CD8-positive, alpha-beta T cell (primary cell): ENCODE measurements at regions of chr6 and their contacts with region 1.

Region 1: GRCh38 chr6:108944707-108945680 is 96.8 kb downstream of the ARMC2 start:
- DNase-seq: no peak
- ATAC-seq: no peak
- H3K4me3 ChIP-seq: no peak overlapping the region
- H3K4me3 Mint-ChIP-seq: no peak overlapping the region
- H3K27ac ChIP-seq: no peak overlapping the region
- H3K27ac Mint-ChIP-seq: peak overlapping the region; percentile 37
- H3K4me1 ChIP-seq: peaks cover 27% of the 10 kb centered on the region
- H3K4me1 Mint-ChIP-seq: peaks cover 48% of the 10 kb centered on the region
- H3K27me3 ChIP-seq: no peaks in the 10 kb centered on the region
- H3K27me3 Mint-ChIP-seq: no peaks in the 10 kb centered on the region
- CTCF ChIP-seq: no peak

Region 2: GRCh38 chr6:108760126-108761050 is 184.6 kb before region 1 on chr6:
- CTCF ChIA-PET with region 1: no interaction called
- POLR2A ChIA-PET with region 1: no interaction called
- intact Hi-C with region 1: no loop called
- DNase-seq: no peak
- ATAC-seq: no peak
- H3K4me3 ChIP-seq: no peak overlapping the region
- H3K4me3 Mint-ChIP-seq: no peak overlapping the region
- H3K27ac ChIP-seq: no peak overlapping the region
- H3K27ac Mint-ChIP-seq: no peak overlapping the region
- H3K4me1 ChIP-seq: no peaks in the 10 kb centered on the region
- H3K4me1 Mint-ChIP-seq: no peaks in the 10 kb centered on the region
- H3K27me3 ChIP-seq: no peaks in the 10 kb centered on the region
- H3K27me3 Mint-ChIP-seq: peaks cover 10% of the 10 kb centered on the region
- CTCF ChIP-seq: no peak

Region 3: DNA sequence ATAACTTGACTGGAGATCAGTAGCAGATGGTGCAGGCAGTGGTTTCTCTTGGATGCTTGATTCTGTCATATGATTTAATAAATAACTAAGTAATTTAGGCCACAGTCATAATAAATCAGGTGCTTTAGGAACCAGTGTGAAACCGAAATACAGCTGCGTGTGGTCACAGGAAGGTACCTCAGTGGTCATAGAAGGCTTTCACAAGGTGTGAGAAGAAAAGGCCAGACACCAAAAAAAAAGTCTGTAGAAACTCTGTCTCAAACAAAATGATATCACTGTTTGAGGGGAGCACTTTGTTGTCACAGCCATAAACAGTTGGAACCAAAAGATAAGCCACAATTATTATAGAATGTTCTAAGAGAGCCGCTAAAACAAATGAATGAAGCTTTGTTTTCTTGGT is 40.3 kb before region 1 on chr6:
- CTCF ChIA-PET with region 1: no interaction called
- POLR2A ChIA-PET with region 1: no interaction called
- intact Hi-C with region 1: loop called in 1 of 2 experiments (anchors 5 kb)
- DNase-seq: peak in 2 of 9 experiments; percentile 47 to 48
- ATAC-seq: no peak
- H3K4me3 ChIP-seq: no peak overlapping the region
- H3K4me3 Mint-ChIP-seq: no peak overlapping the region
- H3K27ac ChIP-seq: no peak overlapping the region
- H3K27ac Mint-ChIP-seq: no peak overlapping the region
- H3K4me1 ChIP-seq: peaks cover 14% of the 10 kb centered on the region
- H3K4me1 Mint-ChIP-seq: peaks cover 29% of the 10 kb centered on the region
- H3K27me3 ChIP-seq: no peaks in the 10 kb centered on the region
- H3K27me3 Mint-ChIP-seq: no peaks in the 10 kb centered on the region
- CTCF ChIP-seq: no peak

Region 4: DNA sequence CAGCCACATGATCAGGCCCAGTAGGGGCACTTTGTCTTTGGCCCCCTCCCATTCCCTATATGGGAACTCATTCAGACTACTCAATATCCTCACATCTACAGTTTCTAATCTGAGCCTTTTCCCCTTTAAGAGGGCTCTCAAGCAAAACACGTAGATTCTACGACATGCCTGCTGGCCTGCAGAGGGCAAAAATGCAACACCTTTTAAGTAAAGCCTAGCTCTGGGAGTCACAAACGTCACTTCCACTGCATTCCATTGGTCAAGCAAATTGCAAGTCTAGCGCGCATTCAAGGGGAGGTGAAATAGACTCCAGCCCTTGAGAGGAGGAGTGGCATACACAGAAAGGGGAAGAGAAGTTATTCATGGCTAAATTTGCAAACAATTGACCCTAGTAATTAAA is 1305.8 kb after region 1 on chr6:
- CTCF ChIA-PET with region 1: no interaction called
- POLR2A ChIA-PET with region 1: no interaction called
- intact Hi-C with region 1: no loop called
- DNase-seq: no peak
- ATAC-seq: no peak
- H3K4me3 ChIP-seq: no peak overlapping the region
- H3K4me3 Mint-ChIP-seq: no peak overlapping the region
- H3K27ac ChIP-seq: no peak overlapping the region
- H3K27ac Mint-ChIP-seq: no peak overlapping the region
- H3K4me1 ChIP-seq: no peaks in the 10 kb centered on the region
- H3K4me1 Mint-ChIP-seq: no peaks in the 10 kb centered on the region
- H3K27me3 ChIP-seq: no peaks in the 10 kb centered on the region
- H3K27me3 Mint-ChIP-seq: no peaks in the 10 kb centered on the region
- CTCF ChIP-seq: no peak